PC-3 (cell line): ENCODE measurements at regions of chr12 and their contacts with region 1.

Region 1: DNA sequence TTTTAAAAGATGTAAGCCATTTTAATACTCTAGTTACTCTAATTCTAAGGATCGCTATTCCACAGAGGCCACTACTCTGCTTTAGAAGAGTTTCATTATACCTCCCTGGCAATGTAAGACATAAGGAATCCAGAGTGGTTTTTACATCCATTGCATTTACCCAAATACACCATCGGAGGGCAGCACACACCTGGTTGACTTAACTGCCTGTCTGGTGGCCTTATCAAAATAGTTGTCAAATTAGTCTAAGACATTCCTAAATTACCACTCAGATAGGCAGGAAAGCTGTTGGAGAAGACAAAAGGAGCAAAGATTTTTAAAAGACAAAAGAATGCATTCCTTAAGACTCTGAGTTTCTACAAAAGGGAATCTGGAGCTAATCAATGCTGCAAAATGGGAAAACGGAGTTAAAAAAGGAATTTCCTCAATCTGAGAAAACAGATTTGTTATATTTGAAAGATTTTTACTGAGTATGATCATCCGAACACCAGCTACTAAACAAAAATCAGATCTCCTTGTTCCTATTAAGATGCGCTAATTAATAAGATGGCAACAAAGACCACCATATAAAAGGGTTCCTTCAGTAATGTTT is 33.8 kb upstream of the FGD4 start:
- DNase-seq: peak; percentile 72
- ATAC-seq: peak; percentile 55
- H3K4me3 ChIP-seq: no peak overlapping the region
- H3K27ac ChIP-seq: no peak overlapping the region
- H3K4me1 ChIP-seq: peaks cover 4% of the 10 kb centered on the region; the same call in 1 of the 2 replicates
- H3K27me3 ChIP-seq: no peaks in the 10 kb centered on the region
- CTCF ChIP-seq: peak; percentile 85

Region 2: DNA sequence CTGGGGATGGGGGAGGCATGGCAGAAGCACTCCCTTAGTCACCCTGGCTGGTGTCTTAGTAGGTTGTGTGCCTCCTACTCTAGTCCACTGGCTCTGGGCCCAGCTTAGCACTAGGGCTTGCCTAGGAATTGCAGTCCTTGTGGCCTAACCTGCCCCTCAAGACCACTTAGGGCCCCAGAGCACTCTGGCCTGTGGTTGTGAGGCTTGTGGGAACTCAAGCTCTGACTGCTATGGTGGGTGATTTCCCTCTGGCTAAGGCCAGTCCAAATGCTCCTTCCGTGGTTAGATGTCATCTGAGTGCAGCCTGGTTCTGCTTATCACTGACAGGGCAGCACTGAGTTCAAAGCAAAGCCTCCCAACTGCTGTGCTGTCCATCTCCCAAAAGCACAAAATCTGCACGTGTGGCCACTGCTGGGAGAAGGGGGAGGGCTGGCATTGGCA is 54.0 kb after region 1 on chr12:
- CTCF ChIA-PET with region 1: no interaction called
- POLR2A ChIA-PET with region 1: no interaction called
- intact Hi-C with region 1: no loop called
- DNase-seq: no peak
- ATAC-seq: no peak
- H3K4me3 ChIP-seq: no peak overlapping the region
- H3K27ac ChIP-seq: no peak overlapping the region
- H3K4me1 ChIP-seq: peaks cover 8% of the 10 kb centered on the region; the same call in 1 of the 2 replicates
- H3K27me3 ChIP-seq: no peaks in the 10 kb centered on the region
- CTCF ChIP-seq: no peak

Region 3: DNA sequence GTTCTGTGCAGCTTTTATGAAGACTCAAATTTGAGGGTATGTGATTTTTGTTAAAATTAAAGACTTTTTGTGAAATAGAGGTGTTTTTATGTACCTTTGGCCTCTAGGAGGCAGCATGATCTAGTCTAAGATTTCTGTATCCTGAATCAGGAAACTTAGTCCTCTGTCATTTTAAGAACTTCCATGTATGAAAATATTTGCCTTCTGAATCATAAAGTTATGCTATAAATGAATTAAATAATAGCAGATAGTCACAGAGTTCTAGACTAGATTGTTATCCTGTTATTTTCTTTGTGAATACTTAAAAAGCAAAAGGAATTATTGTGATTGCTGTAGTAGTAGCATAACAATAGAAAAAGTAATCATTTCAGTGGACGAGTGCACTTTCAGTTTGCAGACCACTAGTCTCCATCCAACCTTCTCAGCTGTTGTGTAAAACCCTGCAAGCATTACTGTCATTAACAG is 90.1 kb after region 1 on chr12:
- CTCF ChIA-PET with region 1: no interaction called
- POLR2A ChIA-PET with region 1: no interaction called
- intact Hi-C with region 1: loop called (anchors 2 kb)
- DNase-seq: peak; percentile 81
- ATAC-seq: peak; percentile 66
- H3K4me3 ChIP-seq: peak overlapping the region; percentile 54
- H3K27ac ChIP-seq: no peak overlapping the region
- H3K4me1 ChIP-seq: peaks cover 34% of the 10 kb centered on the region
- H3K27me3 ChIP-seq: no peaks in the 10 kb centered on the region
- CTCF ChIP-seq: peak; percentile 70

Region 4: GRCh38 chr12:32671930-32672780 is 306.6 kb after region 1 on chr12:
- CTCF ChIA-PET with region 1: no interaction called
- POLR2A ChIA-PET with region 1: no interaction called
- intact Hi-C with region 1: loop called (anchors 2 kb)
- DNase-seq: peak; percentile 63
- ATAC-seq: peak; percentile 54
- H3K4me3 ChIP-seq: no peak overlapping the region
- H3K27ac ChIP-seq: no peak overlapping the region
- H3K4me1 ChIP-seq: no peaks in the 10 kb centered on the region
- H3K27me3 ChIP-seq: no peaks in the 10 kb centered on the region
- CTCF ChIP-seq: peak; percentile 65